GM12878 (cell line): ENCODE measurements at regions of chr14 and their contacts with region 1.

Region 1: GRCh38 chr14:68248481-68249255 is 429.1 kb downstream of the RAD51B start:
- DNase-seq: peak; percentile 89
- ATAC-seq: peak; percentile 84
- H3K4me3 ChIP-seq: no peak overlapping the region
- H3K27ac ChIP-seq: peak overlapping the region; percentile 60
- H3K4me1 ChIP-seq: peaks cover 41% of the 10 kb centered on the region
- H3K27me3 ChIP-seq: no peaks in the 10 kb centered on the region
- CTCF ChIP-seq: peak; percentile 33 to 73 (median 45); a peak in 4 of 6 replicates
- EP300 ChIP-seq: no peak
- POLR2A ChIP-seq: no peak
- RAD21 ChIP-seq: peak; percentile 93

Region 2: GRCh38 chr14:67837011-67837624 is 411.6 kb before region 1 on chr14:
- CTCF ChIA-PET with region 1: interaction called, 5 read pairs
- POLR2A ChIA-PET with region 1: no interaction called
- RAD21 ChIA-PET with region 1: interaction called, 3 read pairs
- SMC1A ChIA-PET with region 1: interaction called, 17 read pairs
- in situ Hi-C with region 1: no loop called
- intact Hi-C with region 1: no loop called
- DNase-seq: peak; percentile 34
- ATAC-seq: peak; percentile 76
- H3K4me3 ChIP-seq: no peak overlapping the region
- H3K27ac ChIP-seq: no peak overlapping the region
- H3K4me1 ChIP-seq: no peaks in the 10 kb centered on the region
- H3K27me3 ChIP-seq: no peaks in the 10 kb centered on the region
- CTCF ChIP-seq: peak; percentile 55 to 79 (median 65); a peak in 5 of 6 replicates
- EP300 ChIP-seq: no peak
- POLR2A ChIP-seq: no peak
- RAD21 ChIP-seq: peak; percentile 85

Region 3: GRCh38 chr14:68181519-68182326 is 66.9 kb before region 1 on chr14:
- CTCF ChIA-PET with region 1: no interaction called
- POLR2A ChIA-PET with region 1: no interaction called
- RAD21 ChIA-PET with region 1: no interaction called
- SMC1A ChIA-PET with region 1: no interaction called
- in situ Hi-C with region 1: no loop called
- intact Hi-C with region 1: no loop called
- DNase-seq: peak; percentile 48
- ATAC-seq: peak; percentile 79
- H3K4me3 ChIP-seq: peak overlapping the region; percentile 47
- H3K27ac ChIP-seq: peak overlapping the region; percentile 56
- H3K4me1 ChIP-seq: peaks cover 21% of the 10 kb centered on the region
- H3K27me3 ChIP-seq: no peaks in the 10 kb centered on the region
- CTCF ChIP-seq: no peak
- EP300 ChIP-seq: no peak
- POLR2A ChIP-seq: no peak
- RAD21 ChIP-seq: no peak

Region 4: DNA sequence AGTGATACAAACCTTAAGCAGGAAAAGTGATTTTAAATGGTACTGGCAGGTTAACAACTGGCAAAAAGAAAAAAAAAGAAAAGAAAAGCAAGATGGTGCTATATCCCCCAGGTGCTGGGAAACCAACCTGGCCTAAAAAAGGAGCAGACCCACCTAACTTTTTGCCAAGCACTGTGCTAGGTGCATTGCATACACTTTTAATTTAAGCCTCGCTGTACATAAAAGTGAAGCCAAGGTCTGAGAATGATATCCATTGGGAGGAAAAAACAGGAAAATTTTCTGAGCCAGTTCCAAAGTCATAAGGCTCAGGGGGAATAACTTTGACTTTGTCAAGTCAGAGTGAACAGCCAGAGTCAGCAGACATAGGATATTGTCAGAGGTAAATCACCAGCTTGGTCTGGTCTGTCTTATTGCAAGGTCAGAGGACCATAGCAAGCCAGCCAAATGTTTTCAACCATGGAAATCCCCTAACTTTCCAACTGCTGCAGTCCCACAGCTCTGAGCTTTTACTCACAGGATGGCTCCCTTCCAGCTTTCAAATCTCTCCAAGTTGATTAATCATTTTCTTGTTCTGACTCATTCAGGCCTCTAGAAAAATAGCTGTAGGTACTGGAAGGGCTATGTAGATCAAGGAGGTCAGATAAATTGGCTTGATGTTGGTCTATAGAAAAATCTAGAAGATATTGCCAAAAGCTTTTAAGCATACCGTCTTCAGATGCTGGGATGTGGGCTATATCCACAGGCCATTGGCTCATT is 16.2 kb before region 1 on chr14:
- CTCF ChIA-PET with region 1: interaction called, 14 read pairs
- POLR2A ChIA-PET with region 1: interaction called, 4 read pairs
- RAD21 ChIA-PET with region 1: interaction called, 73 read pairs
- SMC1A ChIA-PET with region 1: interaction called, 25 read pairs
- in situ Hi-C with region 1: no loop called
- intact Hi-C with region 1: no loop called
- DNase-seq: peak; percentile 99
- ATAC-seq: peak; percentile 97
- H3K4me3 ChIP-seq: no peak overlapping the region
- H3K27ac ChIP-seq: peak overlapping the region; percentile 84
- H3K4me1 ChIP-seq: peaks cover 19% of the 10 kb centered on the region
- H3K27me3 ChIP-seq: no peaks in the 10 kb centered on the region
- CTCF ChIP-seq: no peak
- EP300 ChIP-seq: peak; percentile 84 to 87
- POLR2A ChIP-seq: no peak
- RAD21 ChIP-seq: no peak

Region 5: DNA sequence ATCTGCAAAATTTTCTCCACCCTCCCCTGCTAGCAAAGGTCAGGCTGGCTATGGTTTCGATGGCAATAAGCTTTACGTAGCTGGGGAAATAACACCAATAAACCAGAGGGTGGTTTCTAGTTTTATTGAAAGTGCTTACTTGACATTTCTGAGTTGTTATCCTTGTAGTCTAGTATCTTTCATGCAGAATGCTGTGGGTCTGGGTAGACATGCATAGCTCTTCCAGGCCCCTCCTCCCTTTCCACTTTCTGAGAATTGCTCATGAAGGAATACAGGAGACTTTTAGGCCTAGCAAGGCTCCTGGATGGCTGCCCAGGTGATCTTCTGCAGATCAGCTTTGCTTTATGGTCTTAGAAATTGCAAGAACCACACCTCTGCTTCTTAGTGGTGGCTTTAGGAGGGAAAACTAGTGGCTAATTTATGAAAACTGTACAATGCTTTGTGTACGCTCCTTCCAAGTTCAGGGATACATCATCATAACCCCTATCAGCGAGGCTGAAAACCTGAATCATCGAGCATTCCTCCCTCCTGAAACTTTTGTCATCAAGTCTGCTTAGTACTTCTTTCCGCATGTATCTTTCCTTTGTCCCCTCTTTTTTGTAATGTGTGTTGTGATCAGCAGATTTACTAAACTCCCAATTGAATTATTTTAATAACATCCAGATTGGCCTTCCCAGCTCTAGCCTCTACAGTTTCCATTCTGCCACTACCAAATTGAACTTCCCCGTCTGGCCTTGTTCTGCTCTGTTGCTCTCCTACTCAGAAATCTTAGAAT is 44.0 kb after region 1 on chr14:
- CTCF ChIA-PET with region 1: interaction called, 4 read pairs
- POLR2A ChIA-PET with region 1: interaction called, 4 read pairs
- RAD21 ChIA-PET with region 1: interaction called, 240 read pairs
- SMC1A ChIA-PET with region 1: interaction called, 121 read pairs
- in situ Hi-C with region 1: no loop called
- intact Hi-C with region 1: no loop called
- DNase-seq: no peak
- ATAC-seq: peak; percentile 43; the same call in 2 of the 3 replicates
- H3K4me3 ChIP-seq: no peak overlapping the region
- H3K27ac ChIP-seq: peak overlapping the region; percentile 76
- H3K4me1 ChIP-seq: peaks cover 49% of the 10 kb centered on the region
- H3K27me3 ChIP-seq: no peaks in the 10 kb centered on the region
- CTCF ChIP-seq: no peak
- EP300 ChIP-seq: no peak
- POLR2A ChIP-seq: no peak
- RAD21 ChIP-seq: no peak

Region 6: GRCh38 chr14:68359837-68360552 is 111.3 kb after region 1 on chr14:
- CTCF ChIA-PET with region 1: interaction called, 12 read pairs
- POLR2A ChIA-PET with region 1: interaction called, 3 read pairs
- RAD21 ChIA-PET with region 1: interaction called, 16 read pairs
- SMC1A ChIA-PET with region 1: interaction called, 114 read pairs
- in situ Hi-C with region 1: no loop called
- intact Hi-C with region 1: no loop called
- DNase-seq: no peak
- ATAC-seq: peak; percentile 47
- H3K4me3 ChIP-seq: no peak overlapping the region
- H3K27ac ChIP-seq: peak overlapping the region; percentile 82
- H3K4me1 ChIP-seq: peaks cover 33% of the 10 kb centered on the region
- H3K27me3 ChIP-seq: no peaks in the 10 kb centered on the region
- CTCF ChIP-seq: no peak
- EP300 ChIP-seq: no peak
- POLR2A ChIP-seq: no peak
- RAD21 ChIP-seq: no peak

Region 7: DNA sequence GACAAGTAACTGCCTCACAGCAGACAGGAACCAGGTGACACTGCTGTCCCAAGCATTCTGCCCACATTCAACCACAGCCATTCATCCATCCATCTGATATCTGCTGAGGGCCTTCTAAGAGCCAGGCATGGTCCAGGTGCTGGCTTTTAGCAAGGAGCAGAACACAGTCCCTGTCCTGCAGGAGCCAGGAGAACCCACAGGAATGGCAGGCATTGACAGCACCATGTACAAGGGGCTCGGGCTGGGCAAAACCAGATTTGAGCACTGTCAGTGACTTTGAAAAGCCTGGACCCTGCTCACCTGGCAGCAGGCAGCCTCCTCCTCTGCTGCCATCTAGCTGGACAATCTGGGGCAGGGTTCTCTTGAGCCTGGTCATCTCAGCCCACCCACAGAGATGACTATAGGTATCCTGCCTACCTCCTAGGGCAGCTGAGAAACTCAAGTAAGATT is 407.3 kb after region 1 on chr14:
- CTCF ChIA-PET with region 1: interaction called, 25 read pairs
- POLR2A ChIA-PET with region 1: no interaction called
- RAD21 ChIA-PET with region 1: interaction called, 3 read pairs
- SMC1A ChIA-PET with region 1: interaction called, 10 read pairs
- in situ Hi-C with region 1: no loop called
- intact Hi-C with region 1: no loop called
- DNase-seq: no peak
- ATAC-seq: peak; percentile 72
- H3K4me3 ChIP-seq: no peak overlapping the region
- H3K27ac ChIP-seq: no peak overlapping the region
- H3K4me1 ChIP-seq: no peaks in the 10 kb centered on the region
- H3K27me3 ChIP-seq: no peaks in the 10 kb centered on the region
- CTCF ChIP-seq: peak in 2 of 3 experiments; percentile 3 to 46; a peak in 2 of 6 replicates
- EP300 ChIP-seq: no peak
- POLR2A ChIP-seq: no peak
- RAD21 ChIP-seq: peak; percentile 54

Region 8: GRCh38 chr14:68824517-68825347 is 576.1 kb after region 1 on chr14:
- CTCF ChIA-PET with region 1: interaction called, 310 read pairs
- POLR2A ChIA-PET with region 1: interaction called, 4 read pairs
- RAD21 ChIA-PET with region 1: interaction called, 292 read pairs
- SMC1A ChIA-PET with region 1: interaction called, 314 read pairs
- in situ Hi-C with region 1: no loop called
- intact Hi-C with region 1: no loop called
- DNase-seq: no peak
- ATAC-seq: peak; percentile 10; the same call in 1 of the 3 replicates
- H3K4me3 ChIP-seq: no peak overlapping the region
- H3K27ac ChIP-seq: no peak overlapping the region; the same call in 1 of the 2 replicates
- H3K4me1 ChIP-seq: peaks cover 50% of the 10 kb centered on the region
- H3K27me3 ChIP-seq: no peaks in the 10 kb centered on the region
- CTCF ChIP-seq: peak; percentile 90 to 93 (median 90)
- EP300 ChIP-seq: no peak
- POLR2A ChIP-seq: no peak
- RAD21 ChIP-seq: peak; percentile 64; the same call in 1 of the 2 replicates